Heart left ventricle (tissue), 16 donors: ENCODE measurements at regions of chr7 and their contacts with region 1.

Region 1: DNA sequence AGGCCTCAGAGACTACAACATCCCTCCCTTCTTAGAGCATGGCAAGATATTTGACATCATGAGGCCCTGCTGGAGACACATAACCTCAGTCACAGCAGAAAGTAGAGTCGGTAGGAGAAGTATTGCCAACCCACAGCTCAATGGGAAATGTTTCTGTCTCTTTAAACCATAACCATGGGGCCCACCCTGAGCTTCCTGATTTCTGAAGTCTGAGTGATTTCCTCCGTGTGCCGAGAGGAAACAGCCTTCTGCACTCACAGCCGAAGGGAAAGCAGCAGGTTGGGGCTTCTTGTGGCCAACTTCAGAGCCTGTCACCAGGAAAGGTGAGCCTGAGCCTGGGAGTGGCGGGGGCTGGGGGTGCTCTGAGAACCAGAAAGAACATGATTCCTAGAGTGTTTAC is at the start of gene GIMAP1:
- DNase-seq: peak; percentile 57 to 76 (median 71)
- ATAC-seq: peak; percentile 72 to 93 (median 85)
- H3K4me3 ChIP-seq: peak within 1 kb of the TSS; percentile 28 to 80 (median 60)
- H3K27ac ChIP-seq: peak within 1 kb of the TSS; percentile 77 to 97 (median 90)
- H3K4me1 ChIP-seq: peaks cover 0 to 49% (median 6%) of the 10 kb centered on the region in 12 donors
- H3K27me3 ChIP-seq: no peaks in the 10 kb centered on the region
- CTCF ChIP-seq: no peak
- POLR2A ChIP-seq: peak in 1 of 2 donors; percentile 68
- total RNA-seq, gene GIMAP1: 3.4 to 9.2 (median 5.8) TPM

Region 2: GRCh38 chr7:150567169-150567568 is 149.2 kb before region 1 on chr7 and contains the start of gene GIMAP4:
- intact Hi-C with region 1: loop called in 1 of 10 experiments (anchors 10 kb)
- DNase-seq: peak in 1 of 5 donors; percentile 44
- ATAC-seq: peak; percentile 68 to 85 (median 80)
- H3K4me3 ChIP-seq: peak within 1 kb of the TSS; percentile 35 to 82 (median 60)
- H3K27ac ChIP-seq: peak within 1 kb of the TSS; percentile 74 to 93 (median 88)
- H3K4me1 ChIP-seq: peaks cover 0 to 45% (median 8%) of the 10 kb centered on the region in 12 donors
- H3K27me3 ChIP-seq: no peaks in the 10 kb centered on the region
- CTCF ChIP-seq: no peak
- POLR2A ChIP-seq: peak in 1 of 2 donors; percentile 43
- total RNA-seq, gene GIMAP4: 25.1 to 80.2 (median 35.2) TPM

Region 3: DNA sequence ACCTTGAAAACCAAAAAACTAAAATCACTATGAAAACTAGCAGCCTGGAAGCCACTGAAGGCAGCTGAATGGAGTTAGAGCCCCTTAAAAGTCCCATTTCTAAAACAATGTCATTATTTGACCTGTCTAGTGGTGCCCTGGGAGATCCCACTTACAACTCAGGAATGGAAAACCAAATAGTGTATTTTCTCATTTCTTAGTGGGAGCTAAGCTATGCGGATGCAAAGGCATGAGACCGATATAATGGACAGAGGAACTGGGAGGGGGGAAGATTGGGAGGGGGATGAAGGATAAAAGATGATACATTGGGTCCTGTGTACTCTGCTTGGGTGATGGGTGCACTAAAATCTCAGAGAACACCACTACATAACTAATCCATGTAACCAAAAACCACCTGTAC is 40.7 kb before region 1 on chr7:
- intact Hi-C with region 1: loop called in 3 of 10 experiments (anchors 5 kb)
- DNase-seq: no peak
- ATAC-seq: no peak
- H3K4me3 ChIP-seq: peak overlapping the region in 2 of 12 donors; percentile 5 to 34
- H3K27ac ChIP-seq: peak overlapping the region; percentile 53 to 94 (median 70)
- H3K4me1 ChIP-seq: peaks cover 0 to 40% (median 7%) of the 10 kb centered on the region in 12 donors
- H3K27me3 ChIP-seq: no peaks in the 10 kb centered on the region
- CTCF ChIP-seq: no peak
- POLR2A ChIP-seq: no peak

Region 4: GRCh38 chr7:150685219-150686029 is 30.9 kb before region 1 on chr7 and contains the start of gene GIMAP2:
- intact Hi-C with region 1: loop called in 2 of 10 experiments (anchors 5 kb)
- DNase-seq: peak in 1 of 5 donors; percentile 29
- ATAC-seq: peak in 3 of 4 donors; percentile 54 to 92 (median 83)
- H3K4me3 ChIP-seq: peak within 1 kb of the TSS; percentile 2 to 81 (median 56)
- H3K27ac ChIP-seq: peak within 1 kb of the TSS; percentile 41 to 98 (median 84)
- H3K4me1 ChIP-seq: peaks cover 0 to 51% (median 7%) of the 10 kb centered on the region in 12 donors
- H3K27me3 ChIP-seq: no peaks in the 10 kb centered on the region
- CTCF ChIP-seq: no peak
- POLR2A ChIP-seq: no peak
- total RNA-seq, gene GIMAP2: 2.1 to 23.5 (median 4.9) TPM